Activated T-helper 1 cell treated with anti-CD3 and anti-CD28 coated beads, Interleukin-12 subunit alpha, Interleukin-12 subunit beta, Interleukin-2, Interleukin-4 antibody, amounts not matched to agents 30 ng/mL and 10 ng/mL and 1 ng/mL, durations not matched to agents 14 hours and 24 hours and 36 hours (primary cell): ENCODE measurements at regions of chr2 and their contacts with region 1.

Region 1: DNA sequence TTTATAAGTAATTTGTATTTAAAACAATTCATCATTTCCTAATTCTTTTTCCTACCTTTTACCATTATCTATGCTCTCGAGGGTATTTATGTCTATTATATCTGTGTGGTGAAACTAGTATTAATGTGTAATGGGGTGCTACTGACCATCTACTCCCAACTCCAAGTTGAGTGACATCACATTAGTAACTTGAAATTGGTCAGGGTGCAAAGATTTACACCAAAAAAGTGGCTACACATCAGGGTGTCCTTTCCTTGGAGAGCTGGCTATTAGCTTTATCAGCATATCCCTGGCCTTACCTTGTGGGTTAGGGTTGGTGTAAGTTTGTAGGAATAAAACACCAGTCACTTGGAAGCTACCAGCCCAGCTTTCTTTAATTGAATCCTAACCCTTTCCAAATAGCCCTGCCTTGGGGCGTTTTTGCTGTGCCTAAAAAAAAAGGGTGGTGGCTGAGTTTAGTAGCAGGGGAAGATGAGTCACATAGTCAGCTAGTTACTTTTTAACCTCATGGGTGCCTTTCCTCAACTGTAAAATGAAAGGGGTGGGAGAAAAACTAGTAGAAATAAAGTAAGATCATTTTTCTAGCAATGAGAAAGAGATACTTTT is 14.0 kb downstream of the ANXA4 start:
- DNase-seq: no peak
- H3K4me3 Mint-ChIP-seq: no peak overlapping the region
- H3K27ac Mint-ChIP-seq: no peak overlapping the region
- H3K4me1 Mint-ChIP-seq: peaks cover 19% of the 10 kb centered on the region
- H3K27me3 Mint-ChIP-seq: no peaks in the 10 kb centered on the region

Region 2: DNA sequence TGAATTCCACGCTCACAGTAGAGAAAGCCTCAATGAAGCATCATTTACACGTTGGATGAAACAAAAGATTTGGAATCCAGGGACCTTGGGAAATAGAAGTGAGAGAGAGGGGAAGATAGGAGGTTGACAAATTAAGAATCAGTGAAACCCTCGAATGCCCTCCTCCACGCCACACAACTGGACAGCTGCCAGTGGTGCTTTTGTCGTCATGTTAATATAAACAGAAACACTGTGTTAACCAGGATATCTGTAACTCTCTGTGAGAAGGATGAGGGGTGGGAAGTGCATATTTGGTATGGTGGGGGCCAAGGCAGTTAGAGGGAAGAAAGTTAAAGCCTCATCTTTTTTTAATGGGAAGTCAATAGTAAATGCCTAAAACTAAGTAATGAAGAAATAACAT is 477.6 kb before region 1 on chr2:
- intact Hi-C with region 1: no loop called
- DNase-seq: no peak
- H3K4me3 Mint-ChIP-seq: no peak overlapping the region
- H3K27ac Mint-ChIP-seq: no peak overlapping the region
- H3K4me1 Mint-ChIP-seq: no peaks in the 10 kb centered on the region
- H3K27me3 Mint-ChIP-seq: peaks cover 8% of the 10 kb centered on the region

Region 3: DNA sequence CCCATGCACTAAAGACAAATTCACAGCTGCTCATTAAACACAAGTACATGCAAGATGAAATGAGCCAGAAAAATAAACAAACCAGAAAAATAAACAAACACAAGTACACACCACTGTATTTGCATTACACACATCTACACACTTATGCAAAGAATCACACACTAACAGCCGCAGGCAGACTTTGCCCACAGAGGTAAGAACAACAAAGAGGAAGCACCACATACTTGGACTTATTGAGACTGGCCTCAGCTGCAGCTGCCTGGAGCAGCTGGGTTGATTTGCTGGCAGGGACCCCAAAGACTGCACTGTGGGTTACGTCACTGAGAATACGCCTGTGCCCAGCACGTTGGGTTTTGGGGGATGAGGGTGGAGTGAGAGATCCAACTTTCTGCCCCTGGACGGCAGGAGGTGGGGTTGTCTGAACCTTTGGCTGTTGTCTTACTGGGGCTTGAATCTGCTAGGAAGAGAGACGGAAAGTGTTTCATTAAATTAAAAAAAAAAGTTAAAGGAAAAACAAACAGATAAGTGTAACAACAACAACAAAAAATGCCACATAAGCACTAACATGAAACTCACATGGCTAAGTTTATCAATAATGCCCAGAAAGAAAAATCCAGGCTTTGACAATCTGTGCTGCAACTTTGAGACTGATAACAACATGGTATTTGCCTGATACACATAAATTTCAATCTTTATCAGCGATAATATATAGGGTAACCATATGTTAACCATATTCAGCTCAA is 246.8 kb before region 1 on chr2:
- intact Hi-C with region 1: no loop called
- DNase-seq: no peak
- H3K4me3 Mint-ChIP-seq: no peak overlapping the region
- H3K27ac Mint-ChIP-seq: peak overlapping the region; percentile 83
- H3K4me1 Mint-ChIP-seq: peaks cover 37% of the 10 kb centered on the region
- H3K27me3 Mint-ChIP-seq: no peaks in the 10 kb centered on the region

Region 4: GRCh38 chr2:69741619-69742466 is 14.1 kb before region 1 on chr2 and contains the start of gene ANXA4:
- intact Hi-C with region 1: loop called (anchors 1 kb)
- DNase-seq: peak; percentile 63
- H3K4me3 Mint-ChIP-seq: peak within 1 kb of the TSS; percentile 98
- H3K27ac Mint-ChIP-seq: peak within 1 kb of the TSS; percentile 96
- H3K4me1 Mint-ChIP-seq: peaks cover 26% of the 10 kb centered on the region
- H3K27me3 Mint-ChIP-seq: peaks cover 6% of the 10 kb centered on the region
- total RNA-seq, gene ANXA4: 36.2 and 38.0 TPM in 2 replicates

Region 5: DNA sequence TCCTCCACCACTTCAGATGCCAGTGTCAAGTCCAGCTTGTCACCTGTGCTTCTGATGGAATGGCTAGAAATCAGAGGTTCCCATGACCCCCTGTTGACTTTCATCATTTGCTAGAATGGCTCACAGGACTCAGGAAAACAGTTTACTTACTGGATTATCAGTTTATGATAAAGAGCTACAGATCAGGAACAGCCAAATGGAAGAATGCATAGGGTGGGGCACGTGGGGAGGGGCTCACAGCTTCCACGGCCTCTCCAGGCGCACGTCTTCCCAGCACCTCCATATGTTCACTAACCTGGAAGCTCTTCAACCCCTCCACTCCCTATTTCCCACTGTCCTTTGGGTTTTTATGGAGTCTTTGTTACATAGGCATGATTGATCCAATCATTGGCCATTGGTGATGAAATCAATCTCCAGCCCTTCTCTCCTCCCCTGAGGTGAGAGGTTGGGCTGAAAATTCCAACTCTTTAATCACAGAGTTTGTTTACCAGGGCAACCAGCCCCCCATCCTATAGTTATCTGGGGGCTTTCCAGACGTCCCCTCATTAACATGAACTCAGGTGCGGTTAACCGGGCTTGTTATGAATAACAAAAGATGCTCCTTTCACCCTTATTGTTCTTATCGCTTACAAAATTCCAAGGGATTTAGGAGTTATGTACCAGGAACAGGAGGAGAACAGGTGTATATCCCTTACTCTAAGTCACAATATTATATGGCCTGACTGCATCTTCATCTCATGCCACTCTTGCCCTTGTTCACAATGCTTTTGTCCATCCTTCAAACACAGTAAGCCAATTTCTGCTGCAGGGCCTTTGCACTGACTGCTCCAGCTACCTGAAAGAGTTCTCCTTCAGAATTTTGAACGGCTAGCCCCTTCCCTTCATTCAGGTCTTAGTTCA is 21.2 kb after region 1 on chr2:
- intact Hi-C with region 1: no loop called
- DNase-seq: no peak
- H3K4me3 Mint-ChIP-seq: no peak overlapping the region
- H3K27ac Mint-ChIP-seq: no peak overlapping the region
- H3K4me1 Mint-ChIP-seq: peaks cover 40% of the 10 kb centered on the region
- H3K27me3 Mint-ChIP-seq: peaks cover 1% of the 10 kb centered on the region